Sigmoid colon (tissue), 7 donors: ENCODE measurements at regions of chr4 and their contacts with region 1.

Region 1: GRCh38 chr4:8607603-8608481 is 15.3 kb downstream of the CPZ start:
- DNase-seq: no peak
- H3K4me3 ChIP-seq: no peak overlapping the region
- H3K27ac ChIP-seq: no peak overlapping the region
- H3K4me1 ChIP-seq: peaks cover 0 to 7% (median 1%) of the 10 kb centered on the region in 4 donors
- H3K27me3 ChIP-seq: peaks cover 0 to 13% (median 0%) of the 10 kb centered on the region in 3 donors
- CTCF ChIP-seq: peak; percentile 54 to 99 (median 77)
- EP300 ChIP-seq: no peak
- POLR2A ChIP-seq: no peak

Region 2: GRCh38 chr4:8886612-8887406 is 279.0 kb after region 1 on chr4:
- intact Hi-C with region 1: loop called (anchors 10 kb)
- DNase-seq: no peak
- H3K4me3 ChIP-seq: no peak overlapping the region
- H3K27ac ChIP-seq: no peak overlapping the region
- H3K4me1 ChIP-seq: peaks cover 0 to 2% (median under 1%) of the 10 kb centered on the region in 4 donors
- H3K27me3 ChIP-seq: peaks cover 14 to 67% (median 40%) of the 10 kb centered on the region in 3 donors
- CTCF ChIP-seq: no peak
- EP300 ChIP-seq: no peak
- POLR2A ChIP-seq: no peak

Region 3: DNA sequence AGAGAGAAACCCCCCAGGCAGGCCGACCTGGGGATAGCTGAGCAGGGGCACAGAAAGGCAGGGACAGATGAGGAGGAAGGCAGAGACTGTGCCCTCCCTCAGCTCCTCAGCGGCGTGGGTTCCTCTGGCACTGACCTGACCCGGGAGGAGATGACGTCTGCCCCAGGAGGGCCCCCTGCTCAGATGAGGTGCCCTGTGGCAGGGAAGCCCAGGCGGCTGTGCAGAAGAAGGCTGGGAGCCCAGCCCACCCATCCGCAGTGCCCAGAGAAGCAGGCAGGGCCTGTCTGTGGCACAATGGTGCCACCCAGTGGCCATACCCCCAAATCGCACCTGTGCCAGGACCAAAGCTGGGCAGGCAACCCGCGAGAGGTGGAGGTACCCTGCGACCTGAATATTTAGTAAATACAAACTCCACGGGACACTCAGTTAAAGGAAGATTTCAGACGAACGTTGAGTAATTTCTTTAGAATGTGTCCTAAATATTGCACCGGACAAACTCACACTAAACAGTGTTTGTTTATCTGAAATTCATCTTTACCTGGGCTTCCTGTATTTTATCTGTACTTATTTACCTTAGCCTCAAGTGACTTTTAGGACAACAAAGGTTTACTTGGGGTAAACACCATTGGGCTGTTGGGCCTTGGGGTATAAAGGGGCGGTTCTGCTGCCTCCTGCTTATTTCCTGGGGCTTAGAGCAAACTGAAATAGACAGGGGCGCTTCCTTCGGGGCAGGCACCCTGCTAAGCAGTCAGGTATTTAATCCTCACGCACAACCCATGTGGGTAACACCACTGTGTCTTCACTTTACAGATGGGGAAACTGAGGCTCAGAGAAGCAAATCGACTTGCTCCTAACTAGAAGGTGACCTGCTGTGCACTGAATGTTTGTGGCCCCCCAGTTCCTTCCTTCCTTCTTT is 310.3 kb after region 1 on chr4:
- intact Hi-C with region 1: loop called (anchors 10 kb)
- DNase-seq: peak; percentile 65
- H3K4me3 ChIP-seq: no peak overlapping the region
- H3K27ac ChIP-seq: no peak overlapping the region
- H3K4me1 ChIP-seq: no peaks in the 10 kb centered on the region
- H3K27me3 ChIP-seq: peaks cover 0 to 45% (median 8%) of the 10 kb centered on the region in 3 donors
- CTCF ChIP-seq: peak; percentile 28 to 76 (median 52)
- EP300 ChIP-seq: no peak
- POLR2A ChIP-seq: no peak